Heart left ventricle (tissue), 16 donors: ENCODE measurements at regions of chr12 and their contacts with region 1.

Region 1: DNA sequence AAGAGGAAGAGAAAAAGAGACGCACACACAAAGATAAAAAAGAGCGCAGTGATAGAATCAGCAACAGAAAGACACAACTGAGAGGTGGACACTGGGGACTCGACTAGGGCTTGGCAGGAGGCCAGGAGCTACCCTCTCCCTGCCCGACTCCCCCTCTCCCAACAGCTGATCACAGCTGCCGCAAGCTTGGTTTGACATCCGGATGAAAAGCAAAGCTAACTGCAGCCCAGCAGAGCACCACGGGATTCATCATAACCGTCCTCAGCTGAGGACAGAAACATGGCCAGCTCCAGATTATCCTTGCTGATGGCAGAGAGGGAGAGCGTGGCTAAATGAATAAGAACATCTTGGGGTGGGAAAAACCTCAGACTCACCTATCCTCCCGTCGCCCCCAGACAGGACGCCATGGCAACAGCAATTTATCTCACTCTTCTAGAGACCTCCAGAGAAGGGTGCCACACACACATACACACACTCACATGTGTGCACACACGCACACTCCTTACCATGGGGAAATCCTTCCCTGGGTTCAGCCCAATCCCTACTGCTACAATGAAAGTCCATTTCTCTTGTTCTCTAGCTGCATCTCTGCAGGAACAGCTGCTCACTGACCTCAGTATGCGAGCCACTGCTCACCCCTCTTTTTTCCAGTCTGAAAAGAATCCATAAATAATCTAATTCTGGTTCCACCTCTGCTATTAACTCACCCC is 135.3 kb downstream of the NTF3 start:
- DNase-seq: peak; percentile 64 to 82 (median 77)
- ATAC-seq: peak; percentile 25 to 80 (median 64)
- H3K4me3 ChIP-seq: no peak overlapping the region
- H3K27ac ChIP-seq: no peak overlapping the region
- H3K4me1 ChIP-seq: peaks cover 0 to 22% (median 2%) of the 10 kb centered on the region in 12 donors
- H3K27me3 ChIP-seq: peaks cover 0 to 7% (median 0%) of the 10 kb centered on the region in 9 donors
- CTCF ChIP-seq: no peak
- POLR2A ChIP-seq: no peak

Region 2: DNA sequence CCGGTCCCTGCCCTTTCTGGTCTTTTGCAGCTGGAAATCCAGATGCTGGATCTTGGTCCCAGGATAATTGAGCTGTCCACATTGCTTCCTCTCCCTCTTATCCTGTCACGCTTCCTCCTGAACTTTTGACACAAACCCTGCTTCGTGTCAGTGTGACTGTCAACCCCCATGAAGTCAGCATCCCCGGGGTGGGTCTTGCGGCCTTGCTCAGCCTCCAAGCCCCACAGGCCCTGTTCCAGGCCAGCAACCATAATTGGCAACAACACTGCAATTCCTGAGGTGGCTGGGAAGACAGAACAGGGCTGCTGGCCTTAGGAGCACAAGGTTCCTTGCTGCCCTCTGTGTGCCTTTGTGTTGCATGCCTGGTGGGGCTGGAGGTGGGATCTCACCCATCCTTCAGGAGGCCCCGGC is 60.3 kb before region 1 on chr12:
- intact Hi-C with region 1: loop called in 1 of 10 experiments (anchors 5 kb)
- DNase-seq: peak in 4 of 5 donors; percentile 57 to 80 (median 66)
- ATAC-seq: peak; percentile 57 to 90 (median 72)
- H3K4me3 ChIP-seq: no peak overlapping the region
- H3K27ac ChIP-seq: no peak overlapping the region
- H3K4me1 ChIP-seq: peaks cover 0 to 29% (median 13%) of the 10 kb centered on the region in 12 donors
- H3K27me3 ChIP-seq: peaks cover 0 to 6% (median 0%) of the 10 kb centered on the region in 9 donors
- CTCF ChIP-seq: no peak
- POLR2A ChIP-seq: no peak